Natural killer cell (primary cell): ENCODE measurements at regions of chr10 and their contacts with region 1.

Region 1: GRCh38 chr10:69045441-69046300 is 42.2 kb upstream of the SRGN start:
- DNase-seq: peak; percentile 37 to 70
- ATAC-seq: peak; percentile 70 to 89 (median 84)
- H3K4me3 ChIP-seq: no peak overlapping the region
- H3K4me3 Mint-ChIP-seq: peak overlapping the region; percentile 87
- H3K27ac ChIP-seq: peak overlapping the region; percentile 88
- H3K27ac Mint-ChIP-seq: peak overlapping the region; percentile 95 to 99
- H3K4me1 ChIP-seq: peaks cover 66% of the 10 kb centered on the region
- H3K4me1 Mint-ChIP-seq: peaks cover 52 to 63% of the 10 kb centered on the region in 2 donors
- H3K27me3 ChIP-seq: no peaks in the 10 kb centered on the region
- H3K27me3 Mint-ChIP-seq: no peaks in the 10 kb centered on the region
- CTCF ChIP-seq: no peak

Region 2: GRCh38 chr10:69004821-69005220 is 40.9 kb before region 1 on chr10:
- intact Hi-C with region 1: loop called (anchors 2 kb)
- DNase-seq: peak in 1 of 2 donors; percentile 74
- ATAC-seq: peak; percentile 67 to 90 (median 72)
- H3K4me3 ChIP-seq: no peak overlapping the region
- H3K4me3 Mint-ChIP-seq: no peak overlapping the region
- H3K27ac ChIP-seq: no peak overlapping the region
- H3K27ac Mint-ChIP-seq: peak overlapping the region; percentile 50 to 60
- H3K4me1 ChIP-seq: no peaks in the 10 kb centered on the region
- H3K4me1 Mint-ChIP-seq: peaks cover 5 to 8% of the 10 kb centered on the region in 2 donors
- H3K27me3 ChIP-seq: no peaks in the 10 kb centered on the region
- H3K27me3 Mint-ChIP-seq: no peaks in the 10 kb centered on the region
- CTCF ChIP-seq: peak; percentile 79

Region 3: GRCh38 chr10:69025370-69025896 is 20.2 kb before region 1 on chr10:
- intact Hi-C with region 1: loop called (anchors 1 kb)
- DNase-seq: no peak
- ATAC-seq: no peak
- H3K4me3 ChIP-seq: no peak overlapping the region
- H3K4me3 Mint-ChIP-seq: peak overlapping the region; percentile 4
- H3K27ac ChIP-seq: peak overlapping the region; percentile 34
- H3K27ac Mint-ChIP-seq: peak overlapping the region; percentile 27 to 68
- H3K4me1 ChIP-seq: peaks cover 40% of the 10 kb centered on the region
- H3K4me1 Mint-ChIP-seq: peaks cover 19 to 27% of the 10 kb centered on the region in 2 donors
- H3K27me3 ChIP-seq: no peaks in the 10 kb centered on the region
- H3K27me3 Mint-ChIP-seq: no peaks in the 10 kb centered on the region
- CTCF ChIP-seq: no peak

Region 4: GRCh38 chr10:69061305-69062161 is 15.9 kb after region 1 on chr10:
- intact Hi-C with region 1: loop called (anchors 2 kb)
- DNase-seq: peak in 1 of 2 donors; percentile 66
- ATAC-seq: peak; percentile 56 to 80 (median 67)
- H3K4me3 ChIP-seq: peak overlapping the region; percentile 32
- H3K4me3 Mint-ChIP-seq: peak overlapping the region; percentile 70
- H3K27ac ChIP-seq: peak overlapping the region; percentile 82
- H3K27ac Mint-ChIP-seq: peak overlapping the region; percentile 73 to 89
- H3K4me1 ChIP-seq: peaks cover 64% of the 10 kb centered on the region
- H3K4me1 Mint-ChIP-seq: peaks cover 40 to 45% of the 10 kb centered on the region in 2 donors
- H3K27me3 ChIP-seq: no peaks in the 10 kb centered on the region
- H3K27me3 Mint-ChIP-seq: no peaks in the 10 kb centered on the region
- CTCF ChIP-seq: no peak